ENCODE measurements at regions of chr3 and their contacts with region 1.

Region 1: DNA sequence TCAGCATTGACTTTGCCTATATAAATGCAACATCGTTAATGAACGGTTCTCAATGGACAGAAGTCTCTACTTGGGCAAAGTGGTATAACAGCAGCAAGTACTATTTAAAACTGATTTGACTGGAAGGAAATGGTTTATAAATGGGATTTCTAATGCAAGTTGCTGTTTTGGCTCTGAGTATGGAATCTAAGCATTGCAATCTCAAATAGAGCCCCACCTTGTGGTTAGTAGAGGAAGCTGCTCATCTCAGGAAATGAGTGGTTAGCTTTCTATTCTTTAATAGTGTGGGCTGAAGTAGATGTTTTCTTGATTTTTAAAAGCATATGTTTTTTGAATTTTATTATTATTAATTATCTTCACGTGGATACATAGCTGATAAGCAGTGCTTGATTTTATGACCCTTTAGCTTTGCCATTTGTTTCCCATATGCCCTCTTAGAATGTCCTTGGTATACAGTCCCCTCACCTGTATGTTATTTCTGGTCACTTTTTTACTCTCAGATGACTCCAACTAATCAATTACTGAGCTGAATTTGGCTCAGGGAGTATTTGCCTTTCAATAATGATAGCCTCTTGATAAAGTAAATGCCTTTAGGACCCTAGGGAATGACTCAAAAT is 67.1 kb downstream of the OXSM start:
- DNase-seq: peak in 7 of 9 donors; percentile 10 to 56 (median 37)
- ATAC-seq: peak; percentile 87
- H3K4me3 ChIP-seq: no peak overlapping the region
- H3K4me3 Mint-ChIP-seq: no peak overlapping the region
- H3K27ac ChIP-seq: no peak overlapping the region
- H3K27ac Mint-ChIP-seq: no peak overlapping the region
- H3K4me1 ChIP-seq: no peaks in the 10 kb centered on the region
- H3K4me1 Mint-ChIP-seq: peaks cover 0 to 3% (median 0%) of the 10 kb centered on the region in 7 donors
- H3K27me3 ChIP-seq: no peaks in the 10 kb centered on the region
- H3K27me3 Mint-ChIP-seq: no peaks in the 10 kb centered on the region

Region 2: GRCh38 chr3:25483456-25483855 is 373.6 kb before region 1 on chr3:
- CTCF ChIA-PET with region 1: no interaction called
- POLR2A ChIA-PET with region 1: no interaction called
- intact Hi-C with region 1: no loop called
- DNase-seq: no peak
- ATAC-seq: no peak
- H3K4me3 ChIP-seq: no peak overlapping the region
- H3K4me3 Mint-ChIP-seq: no peak overlapping the region
- H3K27ac ChIP-seq: no peak overlapping the region
- H3K27ac Mint-ChIP-seq: no peak overlapping the region
- H3K4me1 ChIP-seq: no peaks in the 10 kb centered on the region
- H3K4me1 Mint-ChIP-seq: no peaks in the 10 kb centered on the region
- H3K27me3 ChIP-seq: no peaks in the 10 kb centered on the region
- H3K27me3 Mint-ChIP-seq: peaks cover 0 to 8% (median 0%) of the 10 kb centered on the region in 5 donors

Region 3: DNA sequence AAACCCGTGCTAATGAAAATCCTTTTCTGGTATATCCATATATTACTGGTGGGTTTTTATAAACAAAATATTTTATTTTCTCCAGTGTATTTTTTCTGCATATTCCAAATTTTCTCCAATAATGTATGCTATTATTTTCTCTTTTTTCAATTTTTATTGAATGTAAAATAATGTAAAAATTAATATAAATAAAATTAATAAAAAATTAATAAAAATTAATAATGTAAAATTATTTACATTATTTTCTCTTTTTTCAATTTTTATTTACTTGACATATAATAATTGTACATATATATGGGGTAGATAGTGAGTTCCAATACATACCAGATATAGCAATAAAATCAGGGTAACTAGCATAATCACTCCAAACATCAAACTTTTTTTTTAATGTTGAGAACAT is 10.7 kb before region 1 on chr3:
- CTCF ChIA-PET with region 1: interaction called, 10 read pairs
- POLR2A ChIA-PET with region 1: no interaction called
- intact Hi-C with region 1: no loop called
- DNase-seq: no peak
- ATAC-seq: no peak
- H3K4me3 ChIP-seq: no peak overlapping the region
- H3K4me3 Mint-ChIP-seq: no peak overlapping the region
- H3K27ac ChIP-seq: no peak overlapping the region
- H3K27ac Mint-ChIP-seq: no peak overlapping the region
- H3K4me1 ChIP-seq: no peaks in the 10 kb centered on the region
- H3K4me1 Mint-ChIP-seq: no peaks in the 10 kb centered on the region
- H3K27me3 ChIP-seq: no peaks in the 10 kb centered on the region
- H3K27me3 Mint-ChIP-seq: peaks cover 0 to 22% (median 0%) of the 10 kb centered on the region in 5 donors

Region 4: GRCh38 chr3:25910997-25911396 is 54.0 kb after region 1 on chr3:
- CTCF ChIA-PET with region 1: no interaction called
- POLR2A ChIA-PET with region 1: no interaction called
- intact Hi-C with region 1: loop called in 1 of 2 experiments (anchors 5 kb)
- DNase-seq: peak in 7 of 9 donors; percentile 8 to 29 (median 23)
- ATAC-seq: peak; percentile 49
- H3K4me3 ChIP-seq: no peak overlapping the region
- H3K4me3 Mint-ChIP-seq: no peak overlapping the region
- H3K27ac ChIP-seq: no peak overlapping the region
- H3K27ac Mint-ChIP-seq: no peak overlapping the region
- H3K4me1 ChIP-seq: peaks cover 0 to 10% of the 10 kb centered on the region in 2 donors
- H3K4me1 Mint-ChIP-seq: peaks cover 0 to 10% (median 8%) of the 10 kb centered on the region in 7 donors
- H3K27me3 ChIP-seq: no peaks in the 10 kb centered on the region
- H3K27me3 Mint-ChIP-seq: peaks cover 0 to 11% (median 0%) of the 10 kb centered on the region in 5 donors

Region 5: GRCh38 chr3:26260139-26260538 is 403.1 kb after region 1 on chr3:
- CTCF ChIA-PET with region 1: no interaction called
- POLR2A ChIA-PET with region 1: no interaction called
- intact Hi-C with region 1: no loop called
- DNase-seq: no peak
- ATAC-seq: no peak
- H3K4me3 ChIP-seq: no peak overlapping the region
- H3K4me3 Mint-ChIP-seq: no peak overlapping the region
- H3K27ac ChIP-seq: no peak overlapping the region
- H3K27ac Mint-ChIP-seq: no peak overlapping the region
- H3K4me1 ChIP-seq: no peaks in the 10 kb centered on the region
- H3K4me1 Mint-ChIP-seq: no peaks in the 10 kb centered on the region
- H3K27me3 ChIP-seq: no peaks in the 10 kb centered on the region
- H3K27me3 Mint-ChIP-seq: no peaks in the 10 kb centered on the region